Dorsolateral prefrontal cortex (tissue), 120 donors: ENCODE measurements at regions of chr12 and their contacts with region 1.

Region 1: GRCh38 chr12:113261847-113262470 is 40.7 kb downstream of the TPCN1 start:
- DNase-seq: peak in 1 of 10 donors; percentile 13
- H3K4me3 ChIP-seq: no peak overlapping the region
- H3K27ac ChIP-seq: peak overlapping the region in 31 of 59 donors; percentile 4 to 98 (median 90)
- H3K27me3 ChIP-seq: no peaks in the 10 kb centered on the region
- CTCF ChIP-seq: no peak

Region 2: GRCh38 chr12:113184900-113185773 is 76.8 kb before region 1 on chr12 and contains the starts of genes DDX54 and RITA1:
- intact Hi-C with region 1: loop called in 1 of 2 experiments (anchors 5 kb)
- DNase-seq: peak; percentile 69 to 91 (median 84)
- H3K4me3 ChIP-seq: peak within 1 kb of the TSS; percentile 68 to 100 (median 94)
- H3K27ac ChIP-seq: peak within 1 kb of the TSS; percentile 81 to 99 (median 95)
- H3K27me3 ChIP-seq: no peaks in the 10 kb centered on the region
- CTCF ChIP-seq: peak in 8 of 56 donors; percentile 3 to 35 (median 14)
- total RNA-seq, gene DDX54: 20.8 to 54.8 (median 35.0) TPM
- total RNA-seq, gene RITA1: 12.4 to 35.1 (median 24.5) TPM